ENCODE measurements at regions of chr4 and their contacts with region 1.

Region 1: DNA sequence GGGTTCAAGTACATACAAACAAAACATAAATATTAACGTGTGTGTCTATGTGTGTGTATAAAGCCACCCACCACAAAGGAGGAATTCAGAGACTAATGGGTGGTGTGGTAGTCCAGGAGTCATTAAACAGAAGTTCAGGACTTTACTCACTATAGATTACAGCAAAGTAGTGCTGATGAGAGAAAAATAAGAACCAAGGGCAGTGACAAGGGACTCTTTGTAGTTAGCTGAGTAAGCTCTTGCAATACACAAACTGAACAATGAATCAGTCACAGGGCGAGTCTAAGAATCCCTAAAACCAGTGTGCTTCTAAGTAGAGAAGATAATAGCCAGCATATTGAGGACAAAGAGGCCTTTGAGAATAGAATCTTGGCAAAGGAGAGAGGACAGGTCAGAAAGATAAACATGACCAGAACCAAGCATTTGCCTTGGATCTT is 232.4 kb downstream of the PPP3CA start:
- DNase-seq: peak; percentile 99
- ATAC-seq: peak; percentile 94
- H3K4me3 ChIP-seq: no peak overlapping the region; a peak in 1 of 4 replicates
- H3K27ac ChIP-seq: peak overlapping the region; percentile 96
- H3K4me1 ChIP-seq: peaks cover 56 to 83% of the 10 kb centered on the region in 2 experiments
- H3K27me3 ChIP-seq: no peaks in the 10 kb centered on the region
- CTCF ChIP-seq: no peak
- POLR2A ChIP-seq: no peak
- RAD21 ChIP-seq: peak; percentile 44; the same call in 1 of the 2 replicates

Region 2: DNA sequence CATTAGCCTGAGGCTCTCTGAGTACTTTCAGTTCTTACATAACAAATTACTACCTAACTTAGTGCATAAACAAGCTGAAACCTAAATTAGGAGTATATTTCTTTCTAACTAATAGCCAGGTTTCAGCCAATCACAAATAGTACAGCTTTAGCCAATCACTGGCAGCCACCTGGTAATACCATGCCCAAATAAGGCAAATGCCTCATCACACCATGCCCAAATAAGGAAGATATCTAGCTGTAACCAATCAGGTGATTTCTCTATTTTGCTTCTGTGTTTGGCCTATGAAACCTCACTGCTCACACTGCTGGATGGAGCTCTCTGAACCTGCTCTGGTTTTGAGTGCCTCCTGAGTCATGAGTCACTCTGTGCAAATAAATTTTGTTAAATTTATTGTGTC is 1038.2 kb before region 1 on chr4:
- CTCF ChIA-PET with region 1: no interaction called
- POLR2A ChIA-PET with region 1: no interaction called
- RAD21 ChIA-PET with region 1: no interaction called
- intact Hi-C with region 1: no loop called
- DNase-seq: no peak
- ATAC-seq: peak; percentile 50; the same call in 1 of the 2 replicates
- H3K4me3 ChIP-seq: no peak overlapping the region
- H3K27ac ChIP-seq: no peak overlapping the region
- H3K4me1 ChIP-seq: no peaks in the 10 kb centered on the region
- H3K27me3 ChIP-seq: no peaks in the 10 kb centered on the region
- CTCF ChIP-seq: no peak
- POLR2A ChIP-seq: no peak
- RAD21 ChIP-seq: no peak

Region 3: GRCh38 chr4:101103381-101104142 is 11.4 kb before region 1 on chr4:
- CTCF ChIA-PET with region 1: no interaction called
- POLR2A ChIA-PET with region 1: interaction called, 43 read pairs
- RAD21 ChIA-PET with region 1: no interaction called
- intact Hi-C with region 1: no loop called
- DNase-seq: no peak
- ATAC-seq: peak; percentile 69
- H3K4me3 ChIP-seq: no peak overlapping the region
- H3K27ac ChIP-seq: peak overlapping the region; percentile 95
- H3K4me1 ChIP-seq: peaks cover 69 to 74% of the 10 kb centered on the region in 2 experiments
- H3K27me3 ChIP-seq: no peaks in the 10 kb centered on the region
- CTCF ChIP-seq: no peak
- POLR2A ChIP-seq: no peak
- RAD21 ChIP-seq: no peak

Region 4: GRCh38 chr4:101135371-101136010 is 20.5 kb after region 1 on chr4:
- CTCF ChIA-PET with region 1: no interaction called
- POLR2A ChIA-PET with region 1: interaction called, 8 read pairs
- RAD21 ChIA-PET with region 1: no interaction called
- intact Hi-C with region 1: loop called (anchors 1 kb)
- DNase-seq: no peak
- ATAC-seq: no peak
- H3K4me3 ChIP-seq: peak overlapping the region in 1 of 2 experiments; percentile 44; a peak in 2 of 4 replicates
- H3K27ac ChIP-seq: peak overlapping the region; percentile 98
- H3K4me1 ChIP-seq: peaks cover 47 to 54% of the 10 kb centered on the region in 2 experiments
- H3K27me3 ChIP-seq: no peaks in the 10 kb centered on the region
- CTCF ChIP-seq: no peak
- POLR2A ChIP-seq: no peak
- RAD21 ChIP-seq: no peak

Region 5: GRCh38 chr4:102362922-102363432 is 1248.0 kb after region 1 on chr4:
- CTCF ChIA-PET with region 1: no interaction called
- POLR2A ChIA-PET with region 1: no interaction called
- RAD21 ChIA-PET with region 1: no interaction called
- intact Hi-C with region 1: no loop called
- DNase-seq: no peak
- ATAC-seq: no peak
- H3K4me3 ChIP-seq: no peak overlapping the region
- H3K27ac ChIP-seq: no peak overlapping the region
- H3K4me1 ChIP-seq: no peaks in the 10 kb centered on the region
- H3K27me3 ChIP-seq: no peaks in the 10 kb centered on the region
- CTCF ChIP-seq: no peak
- POLR2A ChIP-seq: no peak
- RAD21 ChIP-seq: no peak